Heart left ventricle (tissue), 16 donors: ENCODE measurements at regions of chrX and their contacts with region 1.

Region 1: GRCh38 chrX:53071604-53072417 is 10.4 kb upstream of the TSPYL2 start:
- DNase-seq: peak; percentile 35 to 76 (median 69)
- ATAC-seq: peak; percentile 87 to 93 (median 91)
- H3K4me3 ChIP-seq: peak overlapping the region in 10 of 12 donors; percentile 29 to 55 (median 42)
- H3K27ac ChIP-seq: peak overlapping the region in 2 of 12 donors; percentile 63 to 79
- H3K4me1 ChIP-seq: peaks cover 0 to 3% (median 0%) of the 10 kb centered on the region in 12 donors
- H3K27me3 ChIP-seq: peaks cover 0 to 11% (median 0%) of the 10 kb centered on the region in 9 donors
- CTCF ChIP-seq: peak; percentile 48 to 75 (median 62)
- POLR2A ChIP-seq: no peak

Region 2: GRCh38 chrX:52811065-52811625 is 260.7 kb before region 1 on chrX and contains the start of gene XAGE5:
- intact Hi-C with region 1: no loop called
- DNase-seq: no peak
- ATAC-seq: no peak
- H3K4me3 ChIP-seq: no peak within 1 kb of the TSS
- H3K27ac ChIP-seq: no peak within 1 kb of the TSS
- H3K4me1 ChIP-seq: no peaks in the 10 kb centered on the region
- H3K27me3 ChIP-seq: peaks cover 0 to 45% (median 0%) of the 10 kb centered on the region in 9 donors
- CTCF ChIP-seq: no peak
- POLR2A ChIP-seq: no peak
- total RNA-seq, gene XAGE5: not detected

Region 3: GRCh38 chrX:53093748-53094583 is 22.2 kb after region 1 on chrX and contains the start of gene KANTR:
- intact Hi-C with region 1: loop called in 7 of 10 experiments (anchors 1 to 2 kb)
- DNase-seq: peak; percentile 85 to 90 (median 87)
- ATAC-seq: peak; percentile 90 to 96 (median 92)
- H3K4me3 ChIP-seq: peak within 1 kb of the TSS; percentile 56 to 94 (median 68)
- H3K27ac ChIP-seq: peak within 1 kb of the TSS; percentile 57 to 94 (median 87)
- H3K4me1 ChIP-seq: peaks cover 0 to 11% (median 1%) of the 10 kb centered on the region in 12 donors
- H3K27me3 ChIP-seq: peaks cover 0 to 20% (median 0%) of the 10 kb centered on the region in 9 donors
- CTCF ChIP-seq: peak in 2 of 12 donors; percentile 11 to 14
- POLR2A ChIP-seq: peak in 1 of 2 donors; percentile 75
- total RNA-seq, gene KANTR: 2.5 to 9.2 (median 6.4) TPM

Region 4: DNA sequence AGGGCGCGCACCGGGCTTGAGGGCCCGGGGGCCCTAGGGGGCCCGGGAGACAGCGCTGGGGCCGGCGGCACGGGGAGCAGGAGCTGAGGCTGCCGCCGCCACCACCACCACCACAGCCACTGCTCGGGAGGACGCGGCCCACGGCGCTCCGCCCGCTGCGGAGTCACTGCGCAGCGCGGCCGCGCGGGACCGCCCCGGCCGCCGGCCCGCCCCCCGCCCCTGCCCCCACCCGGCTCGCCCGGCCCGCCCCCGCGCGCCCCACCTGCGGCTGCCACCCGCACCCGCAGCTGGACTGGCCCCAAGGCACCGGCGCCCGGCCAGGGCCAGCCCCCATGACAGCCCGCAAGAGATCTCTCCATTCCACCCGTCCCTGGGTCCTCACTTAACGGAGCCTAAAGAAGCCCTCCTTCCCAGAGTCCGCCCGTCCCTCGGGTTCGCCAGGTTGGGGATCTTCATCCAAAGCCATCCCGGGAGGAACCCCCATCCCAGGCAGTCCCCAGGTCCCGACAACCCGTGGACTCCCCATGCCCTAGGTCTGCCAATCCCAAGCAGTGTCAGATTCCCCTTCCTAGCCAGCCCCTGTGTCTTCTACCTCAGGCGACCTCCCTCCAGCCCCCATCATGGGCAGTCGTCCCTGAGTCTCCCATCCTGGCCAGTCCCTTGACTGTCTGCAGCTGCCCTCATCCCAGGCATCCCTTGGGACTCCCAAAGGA is 249.6 kb after region 1 on chrX:
- intact Hi-C with region 1: no loop called
- DNase-seq: peak in 1 of 5 donors; percentile 19
- ATAC-seq: peak in 3 of 4 donors; percentile 46 to 70 (median 59)
- H3K4me3 ChIP-seq: peak overlapping the region; percentile 31 to 70 (median 60)
- H3K27ac ChIP-seq: no peak overlapping the region
- H3K4me1 ChIP-seq: peaks cover 0 to 22% (median 0%) of the 10 kb centered on the region in 12 donors
- H3K27me3 ChIP-seq: peaks cover 0 to 90% (median 0%) of the 10 kb centered on the region in 9 donors
- CTCF ChIP-seq: no peak
- POLR2A ChIP-seq: peak in 1 of 2 donors; percentile 34